ENCODE measurements at regions of chr3 and their contacts with region 1.

Region 1: DNA sequence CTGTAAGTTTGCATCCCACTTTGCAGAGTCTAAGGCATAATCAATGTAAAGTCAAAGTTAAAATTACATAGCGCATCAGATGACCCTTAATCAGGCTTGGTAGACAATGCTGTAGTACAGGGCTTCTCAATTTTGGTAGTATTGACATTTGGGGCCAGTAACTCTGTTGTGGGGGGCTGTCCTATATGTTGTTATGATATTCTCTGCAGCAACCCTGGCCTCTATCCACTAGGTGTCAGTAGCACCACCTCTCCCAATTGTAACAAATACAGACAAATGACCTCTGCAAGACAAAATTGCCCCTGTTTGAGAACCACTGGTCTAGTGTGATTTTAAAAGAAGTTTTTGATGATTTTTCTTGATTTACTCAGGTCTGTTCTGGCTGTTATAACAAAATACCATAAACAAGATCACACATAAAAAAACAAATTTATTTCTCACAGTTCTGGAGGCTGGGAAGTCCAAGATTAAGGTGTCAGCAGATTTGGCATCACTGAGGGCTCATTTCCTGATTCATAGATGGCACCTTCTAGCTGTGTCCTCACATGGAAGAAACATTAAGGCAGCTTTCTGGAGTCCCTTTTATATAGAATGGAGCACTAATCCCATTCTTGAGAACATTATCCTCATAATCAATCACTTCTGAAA is 37.6 kb upstream of the SLC9A9 start:
- DNase-seq: no peak
- H3K4me3 ChIP-seq: no peak overlapping the region
- H3K27ac ChIP-seq: no peak overlapping the region
- H3K4me1 ChIP-seq: peaks cover 3 to 11% (median 7%) of the 10 kb centered on the region in 4 experiments; a peak in 5 of 7 replicates
- H3K27me3 ChIP-seq: peaks cover 0 to 2% (median 0%) of the 10 kb centered on the region in 4 experiments; a peak in 1 of 7 replicates
- CTCF ChIP-seq: peak in 2 of 3 experiments; percentile 68 to 80; a peak in 3 of 4 replicates
- EP300 ChIP-seq: no peak
- POLR2A ChIP-seq: no peak
- RAD21 ChIP-seq: peak; percentile 80 to 82

Region 2: DNA sequence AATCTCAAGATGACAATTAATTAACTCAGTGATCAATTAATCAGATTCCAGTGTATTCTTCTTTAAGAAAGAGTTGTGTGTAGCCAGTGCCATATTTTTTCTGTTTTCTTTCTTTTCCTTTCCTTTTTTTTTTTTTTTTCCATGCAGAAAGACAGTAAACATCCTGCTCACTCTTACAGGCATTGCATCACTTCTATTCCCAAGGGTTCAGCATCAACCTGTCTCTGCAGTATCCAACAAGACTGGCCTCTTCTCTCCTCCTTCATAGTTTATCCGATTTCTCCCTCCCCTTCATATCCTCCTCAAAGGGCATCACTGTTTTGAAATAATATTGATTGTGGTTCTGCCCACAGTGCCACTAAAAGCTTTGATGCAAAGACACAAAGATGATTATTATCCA is 20.6 kb before region 1 on chr3:
- CTCF ChIA-PET with region 1: interaction called, 11 read pairs
- POLR2A ChIA-PET with region 1: no interaction called
- DNase-seq: no peak
- H3K4me3 ChIP-seq: no peak overlapping the region
- H3K27ac ChIP-seq: no peak overlapping the region
- H3K4me1 ChIP-seq: peaks cover 0 to 5% (median 1%) of the 10 kb centered on the region in 4 experiments; a peak in 1 of 7 replicates
- H3K27me3 ChIP-seq: no peaks in the 10 kb centered on the region
- CTCF ChIP-seq: no peak
- EP300 ChIP-seq: no peak
- POLR2A ChIP-seq: no peak
- RAD21 ChIP-seq: no peak

Region 3: DNA sequence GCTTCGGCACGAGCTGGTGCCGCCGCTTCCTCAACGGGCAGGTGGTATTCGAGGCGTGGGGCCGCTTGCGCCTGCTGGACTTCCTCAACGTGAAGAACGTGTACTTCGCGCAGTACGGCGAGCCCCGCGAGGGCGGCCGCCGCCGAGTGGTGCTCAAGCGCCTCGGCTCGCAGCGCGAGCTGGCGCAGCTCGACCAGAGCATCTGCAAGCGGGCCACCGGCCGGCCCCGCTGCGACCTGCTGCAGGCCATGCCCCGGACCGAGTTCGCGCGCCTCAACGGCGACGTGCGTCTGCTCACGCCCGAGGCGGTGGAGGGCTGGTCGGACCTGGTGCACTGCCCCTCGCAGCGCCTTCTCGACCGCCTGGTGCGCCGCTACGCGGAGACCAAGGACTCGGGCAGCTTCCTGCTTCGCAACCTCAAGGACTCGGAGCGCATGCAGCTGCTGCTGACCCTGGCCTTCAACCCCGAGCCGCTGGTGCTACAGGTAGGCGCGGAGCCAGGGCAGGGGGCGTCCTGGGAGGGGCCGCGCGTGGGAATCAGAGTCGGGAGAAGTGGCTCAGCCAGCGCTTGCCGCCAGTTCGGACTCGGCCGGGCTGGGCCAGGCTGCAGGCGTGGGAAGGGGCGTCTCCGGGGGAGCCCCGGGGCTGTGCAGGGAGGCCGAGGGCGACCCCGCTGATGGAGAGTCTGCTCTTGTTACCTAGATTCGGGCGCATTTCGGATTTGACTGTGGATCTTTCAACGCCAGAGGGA is 86.8 kb after region 1 on chr3:
- CTCF ChIA-PET with region 1: interaction called, 14 read pairs
- POLR2A ChIA-PET with region 1: interaction called, 4 read pairs
- DNase-seq: peak; percentile 9 to 76
- H3K4me3 ChIP-seq: peak overlapping the region; percentile 87 to 97 (median 92)
- H3K27ac ChIP-seq: peak overlapping the region; percentile 92; the same call in 1 of the 2 replicates
- H3K4me1 ChIP-seq: peaks cover 0 to 4% (median 0%) of the 10 kb centered on the region in 4 experiments; a peak in 3 of 7 replicates
- H3K27me3 ChIP-seq: no peaks in the 10 kb centered on the region
- CTCF ChIP-seq: peak in 2 of 3 experiments; percentile 11 to 40; a peak in 2 of 4 replicates
- EP300 ChIP-seq: no peak
- POLR2A ChIP-seq: no peak; a peak in 1 of 3 replicates
- RAD21 ChIP-seq: peak; percentile 47 to 50; a peak in 3 of 4 replicates